Heart right ventricle (tissue), 16 donors: ENCODE measurements at regions of chr22 and their contacts with region 1.

Region 1: DNA sequence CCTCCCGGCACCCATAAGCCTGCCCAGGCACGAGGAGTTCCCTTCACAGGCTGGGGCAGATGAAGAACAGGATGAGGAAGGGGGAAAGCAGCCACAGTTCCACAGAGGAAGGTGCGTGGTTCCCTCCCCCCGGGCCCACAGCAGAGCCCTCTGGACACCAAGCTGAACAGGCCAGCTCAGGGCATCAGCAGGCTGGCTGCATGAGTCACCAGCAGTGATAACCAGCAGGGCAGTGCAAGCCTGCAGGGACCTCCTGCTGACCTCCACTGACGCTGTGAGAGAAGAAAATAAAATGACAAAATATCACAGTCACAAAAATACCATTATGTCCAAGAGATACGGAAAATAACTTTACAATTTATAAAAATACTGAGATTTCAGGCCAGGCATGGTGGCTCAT is 11.5 kb downstream of the RTL6 start:
- DNase-seq: peak in 1 of 2 donors; percentile 16
- ATAC-seq: peak; percentile 53 to 95 (median 80)
- H3K4me3 ChIP-seq: no peak overlapping the region
- H3K27ac ChIP-seq: no peak overlapping the region
- H3K4me1 ChIP-seq: peaks cover 0 to 7% (median 0%) of the 10 kb centered on the region in 9 donors
- H3K27me3 ChIP-seq: no peaks in the 10 kb centered on the region
- CTCF ChIP-seq: no peak

Region 2: GRCh38 chr22:44012162-44012561 is 474.4 kb before region 1 on chr22:
- intact Hi-C with region 1: loop called in 1 of 10 experiments (anchors 10 kb)
- DNase-seq: no peak
- ATAC-seq: peak in 4 of 8 donors; percentile 14 to 55 (median 52)
- H3K4me3 ChIP-seq: no peak overlapping the region
- H3K27ac ChIP-seq: peak overlapping the region in 2 of 10 donors; percentile 26 to 72
- H3K4me1 ChIP-seq: peaks cover 0 to 11% (median 0%) of the 10 kb centered on the region in 9 donors
- H3K27me3 ChIP-seq: no peaks in the 10 kb centered on the region
- CTCF ChIP-seq: no peak

Region 3: DNA sequence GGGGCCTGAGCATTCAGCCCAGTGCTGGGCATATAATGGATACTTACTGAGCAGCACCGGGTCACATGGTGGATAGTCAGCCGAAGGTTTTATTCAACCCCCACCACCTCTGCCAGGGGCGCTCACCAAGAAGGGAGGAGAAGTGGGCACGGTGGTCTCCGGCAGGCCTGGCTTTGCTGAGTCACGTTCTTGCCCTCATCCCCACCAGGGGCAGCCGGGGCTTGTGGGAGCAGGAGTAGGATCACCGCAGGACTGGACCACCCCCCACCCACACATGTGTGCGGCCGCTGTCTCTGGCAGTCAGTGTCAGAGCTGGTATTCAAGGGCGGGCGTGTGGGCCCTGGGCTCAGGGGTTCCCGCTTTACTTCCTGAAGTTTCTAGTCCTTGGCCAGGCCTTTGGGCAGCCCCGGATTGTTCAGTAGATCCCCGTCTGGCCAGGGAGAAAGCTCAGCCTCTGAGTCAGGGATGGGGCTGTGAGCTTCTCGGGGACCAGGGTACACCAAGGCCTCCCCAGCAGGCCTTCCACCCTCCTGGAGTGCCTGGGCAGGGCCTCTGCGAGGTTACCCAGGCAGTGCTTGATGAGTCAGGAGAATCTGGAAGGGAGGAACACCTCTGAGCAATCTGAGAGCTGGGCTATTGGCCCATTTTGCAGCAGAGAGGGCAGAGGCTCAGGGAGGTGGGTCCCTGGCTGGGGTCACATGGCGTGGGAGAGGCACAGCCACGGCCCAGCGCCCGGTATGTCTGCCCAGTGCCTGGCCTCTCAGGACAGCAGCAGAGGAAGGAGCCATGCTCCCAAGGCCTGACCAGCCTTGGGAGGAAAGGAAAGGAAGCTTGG is 49.1 kb before region 1 on chr22:
- intact Hi-C with region 1: no loop called
- DNase-seq: no peak
- ATAC-seq: no peak
- H3K4me3 ChIP-seq: no peak overlapping the region
- H3K27ac ChIP-seq: no peak overlapping the region
- H3K4me1 ChIP-seq: peaks cover 0 to 1% (median 0%) of the 10 kb centered on the region in 9 donors
- H3K27me3 ChIP-seq: peaks cover 0 to 4% (median 0%) of the 10 kb centered on the region in 7 donors
- CTCF ChIP-seq: no peak

Region 4: GRCh38 chr22:44497218-44497904 is 10.8 kb after region 1 on chr22:
- intact Hi-C with region 1: no loop called
- DNase-seq: peak in 1 of 2 donors; percentile 11
- ATAC-seq: peak in 2 of 8 donors; percentile 3 to 22
- H3K4me3 ChIP-seq: peak overlapping the region; percentile 29 to 95 (median 77)
- H3K27ac ChIP-seq: peak overlapping the region; percentile 11 to 91 (median 82)
- H3K4me1 ChIP-seq: peaks cover 3 to 29% (median 19%) of the 10 kb centered on the region in 9 donors
- H3K27me3 ChIP-seq: no peaks in the 10 kb centered on the region
- CTCF ChIP-seq: no peak

Region 5: DNA sequence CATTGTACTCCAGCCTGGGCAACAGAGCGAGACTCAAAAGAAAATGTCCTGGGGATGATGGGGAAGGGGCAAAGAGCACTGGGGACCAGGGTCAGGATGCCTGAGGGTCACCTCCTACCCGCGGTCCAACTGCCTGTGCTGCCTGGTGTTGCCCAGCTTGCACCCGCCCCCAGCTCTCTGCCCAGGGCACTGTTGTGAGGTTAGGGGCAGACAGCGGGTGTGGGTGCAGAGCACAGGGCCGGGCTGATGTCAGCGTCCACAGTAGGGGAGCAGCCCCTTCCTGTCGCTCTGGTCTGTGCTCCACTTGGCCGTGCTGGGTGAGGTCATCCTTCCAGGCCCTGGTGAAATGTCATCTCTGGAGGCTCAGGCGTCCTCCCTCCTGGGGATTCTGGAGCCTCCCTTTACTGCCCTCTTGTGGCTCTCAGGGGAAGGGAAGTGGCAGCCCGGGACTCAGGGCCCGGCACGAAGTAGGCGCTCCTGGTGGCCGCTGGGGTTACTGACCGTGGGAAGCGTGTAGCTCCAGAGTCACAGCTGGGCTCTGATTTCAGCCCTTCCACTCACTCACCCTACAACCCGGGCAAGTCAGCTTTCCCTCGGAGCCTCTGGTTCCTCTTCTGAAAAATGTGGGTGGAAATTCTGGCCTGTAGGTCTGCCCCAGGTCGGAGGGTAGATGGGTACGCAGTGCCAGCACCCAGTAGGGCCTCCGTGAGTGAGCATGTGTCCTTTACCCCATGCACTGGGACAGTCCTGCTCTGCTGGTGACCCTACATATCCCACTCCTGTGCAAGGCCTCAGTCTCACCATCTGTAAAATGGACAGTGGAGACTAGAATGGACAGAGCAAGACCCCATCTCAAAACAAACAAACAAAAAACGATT is 198.2 kb after region 1 on chr22:
- intact Hi-C with region 1: no loop called
- DNase-seq: peak; percentile 75 to 84
- ATAC-seq: peak; percentile 84 to 93 (median 91)
- H3K4me3 ChIP-seq: no peak overlapping the region
- H3K27ac ChIP-seq: peak overlapping the region in 1 of 10 donors; percentile 57
- H3K4me1 ChIP-seq: peaks cover 0 to 29% (median 8%) of the 10 kb centered on the region in 9 donors
- H3K27me3 ChIP-seq: no peaks in the 10 kb centered on the region
- CTCF ChIP-seq: peak; percentile 72 to 99 (median 91)